Lower leg skin (tissue), 4 donors: ENCODE measurements at regions of chr20 and their contacts with region 1.

Region 1: DNA sequence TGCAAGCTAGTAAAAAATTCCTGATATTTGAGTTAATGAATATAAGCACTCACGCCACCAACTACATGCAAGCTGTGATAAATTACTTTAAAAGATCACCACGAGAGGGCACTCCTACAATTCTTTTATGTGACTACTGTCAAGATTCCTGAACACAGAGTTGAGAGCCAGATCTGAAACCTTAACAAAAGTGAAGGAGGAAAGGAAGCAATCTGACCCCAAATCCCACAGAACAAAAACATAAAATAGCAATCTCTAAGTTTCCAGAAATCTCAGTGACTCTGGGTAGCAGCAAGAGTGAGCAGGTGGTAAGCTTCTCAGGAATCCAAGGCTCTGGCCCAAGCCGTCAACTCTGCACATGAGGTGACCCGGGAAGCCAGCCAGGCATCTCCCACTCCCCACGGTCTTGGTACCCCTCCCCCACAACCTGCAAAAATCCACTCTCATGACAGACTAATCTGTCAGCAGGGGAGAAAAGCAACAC is 55.1 kb downstream of the STAU1 start:
- DNase-seq: peak in 1 of 2 donors; percentile 21
- H3K4me3 ChIP-seq: no peak overlapping the region
- CTCF ChIP-seq: peak in 1 of 3 donors; percentile 59
- POLR2A ChIP-seq: no peak

Region 2: DNA sequence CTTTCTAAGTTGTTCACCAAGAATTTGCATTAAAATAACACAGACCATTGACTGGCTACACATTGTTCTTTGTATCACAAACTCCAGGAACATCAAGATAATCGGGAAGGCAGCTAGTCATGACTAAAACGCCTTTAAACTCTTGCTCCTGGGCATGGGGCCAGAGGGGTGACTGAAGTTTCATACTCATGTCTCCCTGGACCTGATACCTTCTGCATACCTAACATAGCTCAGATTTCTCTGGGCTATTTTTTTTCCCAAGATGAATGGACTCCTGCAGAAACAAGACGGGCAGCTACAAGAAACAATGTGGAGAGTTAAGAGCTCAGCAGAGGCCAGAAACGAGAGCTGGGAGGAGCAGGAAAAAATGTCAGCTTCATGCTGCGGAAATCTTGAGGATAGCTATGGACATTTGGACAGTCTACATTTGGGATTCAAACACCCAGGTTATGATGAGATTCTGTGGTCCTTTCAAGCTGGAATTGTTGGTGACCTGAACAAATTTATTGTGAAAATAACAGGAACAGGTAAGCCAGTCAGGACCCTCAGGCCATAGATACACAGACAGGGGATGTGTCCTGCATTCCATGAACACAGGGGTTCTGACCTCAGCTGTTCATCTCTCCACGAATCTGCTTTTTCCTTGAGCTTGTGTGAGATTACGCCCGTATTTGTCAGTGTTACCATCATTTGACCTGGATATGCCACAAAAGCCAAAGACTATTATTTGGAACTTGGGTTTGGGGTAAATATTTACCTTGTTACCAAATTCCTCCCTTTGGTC is 594.4 kb before region 1 on chr20:
- intact Hi-C with region 1: no loop called
- DNase-seq: no peak
- H3K4me3 ChIP-seq: no peak overlapping the region
- CTCF ChIP-seq: no peak
- POLR2A ChIP-seq: no peak

Region 3: GRCh38 chr20:49028684-49029083 is 104.4 kb before region 1 on chr20:
- intact Hi-C with region 1: no loop called
- DNase-seq: no peak
- H3K4me3 ChIP-seq: no peak overlapping the region
- CTCF ChIP-seq: no peak
- POLR2A ChIP-seq: no peak

Region 4: DNA sequence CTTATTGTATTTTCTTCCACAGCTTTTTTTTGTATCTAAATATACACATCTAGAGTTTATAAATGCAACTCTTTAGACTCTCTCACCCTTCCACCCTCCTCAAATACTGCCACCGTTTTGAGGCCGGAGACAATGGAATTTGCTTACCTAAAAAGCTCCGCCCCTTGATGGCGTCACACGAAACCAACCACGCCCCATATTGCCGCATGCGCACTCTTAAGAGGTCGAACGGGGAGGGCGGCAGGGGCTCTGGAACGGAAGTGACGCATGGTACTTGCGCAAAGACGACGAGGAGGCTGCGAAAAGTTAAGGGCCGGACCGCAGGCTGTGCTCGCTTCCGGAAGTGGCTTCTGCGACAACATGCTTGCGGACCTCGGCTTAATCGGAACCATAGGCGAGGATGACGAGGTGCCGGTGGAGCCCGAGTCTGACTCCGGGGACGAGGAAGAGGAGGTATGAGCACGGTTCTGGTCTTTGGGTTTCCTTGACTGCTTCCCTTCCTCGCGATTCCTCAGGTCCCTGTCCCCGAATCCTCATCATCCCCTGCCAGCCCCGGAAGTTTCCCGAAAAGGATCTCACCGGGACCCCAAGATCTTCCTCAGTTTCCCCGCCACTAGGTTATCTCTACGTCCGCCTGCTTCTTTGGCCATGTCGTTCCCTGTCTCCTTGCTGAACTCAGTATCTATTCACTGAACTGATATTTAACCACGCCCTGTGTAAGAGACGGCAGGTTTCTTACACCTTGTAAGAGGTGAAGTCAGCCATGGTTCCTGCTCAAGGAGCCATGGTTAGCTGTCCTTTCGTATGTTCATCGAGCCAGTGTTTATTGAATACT is 86.3 kb after region 1 on chr20 and contains the start of gene DDX27:
- intact Hi-C with region 1: loop called (anchors 5 kb)
- DNase-seq: peak; percentile 99 to 100
- H3K4me3 ChIP-seq: peak within 1 kb of the TSS; percentile 60
- CTCF ChIP-seq: no peak
- POLR2A ChIP-seq: peak in 1 of 2 donors; percentile 38
- total RNA-seq, gene DDX27: 33.9 to 38.0 (median 36.7) TPM

Region 5: GRCh38 chr20:49323622-49324238 is 190.7 kb after region 1 on chr20:
- intact Hi-C with region 1: no loop called
- DNase-seq: no peak
- H3K4me3 ChIP-seq: no peak overlapping the region
- CTCF ChIP-seq: no peak
- POLR2A ChIP-seq: no peak